ENCODE measurements at regions of chr2 and their contacts with region 1.

Region 1: DNA sequence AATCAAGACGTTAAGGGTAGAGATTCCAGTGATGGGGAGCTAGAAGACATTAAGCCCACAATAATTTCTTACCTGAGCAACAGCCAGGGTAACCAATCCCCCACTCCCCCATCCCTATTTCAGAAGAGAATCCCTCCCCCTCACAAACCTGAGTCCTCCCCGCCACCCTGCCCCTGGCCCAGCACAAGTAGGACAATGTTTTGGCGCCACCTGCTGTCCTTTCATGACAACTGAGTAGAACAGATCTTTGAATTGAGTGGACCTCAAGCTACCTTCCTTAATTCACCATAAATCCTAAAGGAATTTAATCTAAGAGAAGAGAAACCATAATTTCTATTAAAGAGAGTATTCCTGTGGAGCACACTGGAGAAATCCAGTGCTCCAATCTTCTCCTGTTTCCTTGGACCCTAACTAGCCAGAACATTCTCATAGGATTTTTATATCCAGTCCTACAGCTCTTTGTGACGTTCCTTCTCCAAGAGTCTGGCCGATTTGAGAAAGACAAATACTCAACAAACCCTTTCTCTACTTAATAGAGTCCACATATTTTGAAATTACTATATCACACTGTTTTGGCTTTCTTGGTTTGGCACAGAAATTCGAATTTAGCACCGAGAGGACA is 41.1 kb downstream of the NHEJ1 start:
- DNase-seq: peak; percentile 59
- ATAC-seq: peak; percentile 84

Region 2: DNA sequence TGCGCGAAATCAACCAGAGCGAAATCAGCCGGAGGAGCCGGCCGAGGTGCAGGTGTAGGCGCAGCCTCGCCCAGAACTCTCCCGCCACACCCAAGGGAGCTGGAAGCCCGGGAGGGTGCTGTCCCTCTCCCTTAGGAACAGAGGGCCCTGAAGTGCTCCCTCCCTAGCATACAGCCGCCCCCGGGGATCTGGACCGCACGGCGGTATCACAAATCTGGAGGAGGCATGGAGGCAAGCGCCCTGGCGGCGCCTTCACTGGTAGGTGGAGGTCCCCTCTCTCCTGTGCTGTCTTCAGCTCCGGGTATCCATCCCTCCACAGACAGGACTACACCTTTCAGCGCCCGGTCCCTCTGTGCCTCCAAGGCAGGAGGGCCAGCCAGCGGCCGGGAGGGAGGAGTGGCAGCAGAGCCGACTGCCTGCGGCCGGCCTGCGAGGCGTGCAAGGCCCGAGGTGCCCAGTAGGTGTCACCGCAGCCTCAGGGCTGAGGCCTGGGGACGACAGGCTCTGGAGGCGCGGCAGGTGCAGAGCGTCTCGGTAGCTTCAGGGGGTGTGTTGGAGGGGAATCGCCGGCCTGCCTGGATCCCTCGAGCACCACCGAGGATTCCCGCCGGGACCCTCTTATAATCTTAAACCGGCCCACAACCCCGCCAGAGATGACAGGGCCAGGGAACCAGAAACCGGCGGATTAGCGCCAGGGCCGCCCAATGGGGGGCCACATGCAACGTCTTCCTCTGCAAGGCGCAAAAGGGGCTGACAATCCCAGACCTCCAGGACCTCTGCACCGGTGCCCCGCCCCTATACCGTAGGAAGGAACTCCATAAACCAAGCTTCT is 61.6 kb before region 1 on chr2:
- intact Hi-C with region 1: loop called (anchors 2 kb)
- DNase-seq: peak; percentile 84
- ATAC-seq: peak; percentile 97

Region 3: GRCh38 chr2:219079417-219079816 is 40.1 kb before region 1 on chr2:
- intact Hi-C with region 1: loop called (anchors 5 kb)
- DNase-seq: no peak
- ATAC-seq: no peak